ENCODE measurements at regions of chrX and their contacts with region 1.

Region 1: DNA sequence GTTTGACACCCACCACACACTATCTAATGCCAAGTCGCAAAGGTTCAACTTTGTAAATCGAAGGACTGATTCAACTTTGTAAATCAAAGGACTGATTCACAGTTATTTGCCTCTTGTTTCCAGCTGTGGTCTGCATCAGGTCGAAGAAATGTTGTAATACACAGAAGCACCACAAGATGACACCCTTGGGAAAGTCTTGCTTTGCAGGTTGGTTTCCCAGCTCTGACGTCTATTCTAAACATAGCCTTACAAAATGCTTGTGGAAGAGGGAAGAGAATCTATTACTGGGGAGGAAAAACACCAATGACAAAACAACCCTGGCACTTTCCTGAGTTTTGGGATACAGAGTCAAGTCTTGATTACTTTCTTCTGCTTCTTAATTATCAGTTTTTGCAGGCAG is 35.3 kb downstream of the SUPT20HL1 start:
- DNase-seq: peak; percentile 82
- ATAC-seq: peak; percentile 93
- H3K4me3 ChIP-seq: no peak overlapping the region
- H3K27ac ChIP-seq: no peak overlapping the region
- H3K4me1 ChIP-seq: no peaks in the 10 kb centered on the region
- H3K27me3 ChIP-seq: peaks cover 27% of the 10 kb centered on the region
- CTCF ChIP-seq: peak; percentile 83
- POLR2A ChIP-seq: no peak
- RAD21 ChIP-seq: peak; percentile 86

Region 2: GRCh38 chrX:24259544-24260240 is 136.1 kb before region 1 on chrX:
- CTCF ChIA-PET with region 1: interaction called, 3 read pairs
- POLR2A ChIA-PET with region 1: no interaction called
- dilution Hi-C with region 1: no loop called
- in situ Hi-C with region 1: no loop called
- intact Hi-C with region 1: loop called (anchors 2 kb)
- DNase-seq: peak; percentile 80
- ATAC-seq: peak; percentile 94
- H3K4me3 ChIP-seq: no peak overlapping the region
- H3K27ac ChIP-seq: no peak overlapping the region
- H3K4me1 ChIP-seq: no peaks in the 10 kb centered on the region; the same call in 1 of the 2 replicates
- H3K27me3 ChIP-seq: peaks cover 7% of the 10 kb centered on the region
- CTCF ChIP-seq: peak; percentile 73
- POLR2A ChIP-seq: no peak
- RAD21 ChIP-seq: peak; percentile 79

Region 3: DNA sequence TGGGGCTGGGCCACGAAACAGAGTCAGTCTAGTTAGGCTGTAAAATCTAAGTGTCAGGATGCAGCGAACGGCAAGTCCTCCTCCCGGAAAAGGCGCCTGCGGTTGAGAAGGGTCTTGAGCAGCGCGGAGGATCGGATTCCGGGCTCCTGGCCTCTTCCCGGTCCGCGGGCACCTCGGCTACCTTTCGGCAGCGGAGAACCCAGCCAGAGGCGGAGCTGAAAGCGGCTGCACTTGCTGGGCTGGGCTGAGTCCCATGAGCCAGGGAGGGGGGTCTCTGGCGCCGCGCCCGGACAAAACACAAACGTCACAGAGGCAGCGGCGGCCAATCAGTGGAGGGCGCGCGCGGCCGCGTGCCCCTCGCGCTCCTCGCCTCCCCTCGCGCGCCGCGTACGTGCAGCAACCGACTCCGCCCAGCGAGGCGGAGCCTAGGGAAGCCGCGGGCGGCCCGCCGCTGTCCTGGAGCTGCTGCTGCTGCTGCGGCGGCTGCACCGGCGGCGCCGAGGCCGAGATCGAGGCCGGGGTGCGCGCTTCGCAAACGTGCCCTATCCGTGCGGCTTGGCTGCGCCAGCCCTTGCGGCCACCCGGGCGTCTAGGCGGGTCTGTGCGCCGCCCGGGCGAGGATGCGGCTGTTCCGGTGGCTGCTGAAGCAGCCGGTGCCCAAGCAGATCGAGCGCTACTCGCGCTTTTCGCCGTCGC is 69.2 kb after region 1 on chrX and contains the start of gene PDK3:
- CTCF ChIA-PET with region 1: interaction called, 5 read pairs
- POLR2A ChIA-PET with region 1: interaction called, 3 read pairs
- dilution Hi-C with region 1: no loop called
- in situ Hi-C with region 1: no loop called
- intact Hi-C with region 1: loop called (anchors 2 kb)
- DNase-seq: peak; percentile 77
- ATAC-seq: peak; percentile 100
- H3K4me3 ChIP-seq: peak within 1 kb of the TSS; percentile 87
- H3K27ac ChIP-seq: no peak within 1 kb of the TSS; the same call in 1 of the 2 replicates
- H3K4me1 ChIP-seq: no peaks in the 10 kb centered on the region
- H3K27me3 ChIP-seq: peaks cover 3% of the 10 kb centered on the region
- CTCF ChIP-seq: no peak
- POLR2A ChIP-seq: no peak
- RAD21 ChIP-seq: no peak
- total RNA-seq, gene PDK3: 4.8 and 5.0 TPM in 2 replicates

Region 4: GRCh38 chrX:24498975-24499374 is 103.2 kb after region 1 on chrX:
- CTCF ChIA-PET with region 1: interaction called, 9 read pairs
- POLR2A ChIA-PET with region 1: no interaction called
- dilution Hi-C with region 1: no loop called
- in situ Hi-C with region 1: no loop called
- intact Hi-C with region 1: loop called (anchors 1 kb)
- DNase-seq: peak; percentile 11
- ATAC-seq: peak; percentile 35; the same call in 1 of the 2 replicates
- H3K4me3 ChIP-seq: no peak overlapping the region
- H3K27ac ChIP-seq: no peak overlapping the region
- H3K4me1 ChIP-seq: no peaks in the 10 kb centered on the region
- H3K27me3 ChIP-seq: no peaks in the 10 kb centered on the region; the same call in 1 of the 2 replicates
- CTCF ChIP-seq: peak; percentile 50
- POLR2A ChIP-seq: no peak
- RAD21 ChIP-seq: peak; percentile 38

Region 5: GRCh38 chrX:24561121-24561520 is 165.3 kb after region 1 on chrX:
- CTCF ChIA-PET with region 1: no interaction called
- POLR2A ChIA-PET with region 1: no interaction called
- dilution Hi-C with region 1: no loop called
- in situ Hi-C with region 1: no loop called
- intact Hi-C with region 1: loop called (anchors 2 kb)
- DNase-seq: peak; percentile 11
- ATAC-seq: no peak
- H3K4me3 ChIP-seq: no peak overlapping the region
- H3K27ac ChIP-seq: no peak overlapping the region
- H3K4me1 ChIP-seq: no peaks in the 10 kb centered on the region
- H3K27me3 ChIP-seq: peaks cover 6% of the 10 kb centered on the region; the same call in 1 of the 2 replicates
- CTCF ChIP-seq: peak; percentile 28
- POLR2A ChIP-seq: no peak
- RAD21 ChIP-seq: peak; percentile 39

Region 6: GRCh38 chrX:24693453-24694202 is 297.9 kb after region 1 on chrX and contains the start of gene POLA1:
- CTCF ChIA-PET with region 1: no interaction called
- POLR2A ChIA-PET with region 1: no interaction called
- dilution Hi-C with region 1: no loop called
- in situ Hi-C with region 1: no loop called
- intact Hi-C with region 1: loop called (anchors 5 kb)
- DNase-seq: peak; percentile 95
- ATAC-seq: peak; percentile 98
- H3K4me3 ChIP-seq: peak within 1 kb of the TSS; percentile 86
- H3K27ac ChIP-seq: peak within 1 kb of the TSS; percentile 24
- H3K4me1 ChIP-seq: no peaks in the 10 kb centered on the region
- H3K27me3 ChIP-seq: no peaks in the 10 kb centered on the region
- CTCF ChIP-seq: peak; percentile 33
- POLR2A ChIP-seq: no peak
- RAD21 ChIP-seq: no peak; the same call in 1 of the 2 replicates
- total RNA-seq, gene POLA1: 14.4 and 15.1 TPM in 2 replicates

Region 7: DNA sequence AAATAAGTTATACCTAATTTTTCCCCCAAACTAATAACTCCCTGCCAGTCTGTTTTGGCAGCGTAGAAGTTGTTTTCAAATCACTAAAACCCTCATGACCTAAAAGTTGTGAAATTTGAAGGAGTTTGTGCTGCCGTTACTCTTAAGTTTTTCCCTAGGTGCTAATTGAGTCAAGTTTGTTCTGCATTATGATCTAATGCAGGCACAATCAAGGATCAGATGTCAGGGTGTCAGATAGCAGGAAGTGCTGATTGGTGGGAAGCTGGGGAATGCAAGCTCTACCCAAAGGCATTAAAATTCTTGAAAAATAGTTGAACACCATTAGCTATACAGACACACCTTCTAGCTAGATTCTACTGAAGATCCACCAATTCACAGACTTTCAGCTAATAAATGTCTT is 568.0 kb after region 1 on chrX:
- CTCF ChIA-PET with region 1: no interaction called
- POLR2A ChIA-PET with region 1: no interaction called
- dilution Hi-C with region 1: no loop called
- in situ Hi-C with region 1: no loop called
- intact Hi-C with region 1: no loop called
- DNase-seq: no peak
- ATAC-seq: no peak
- H3K4me3 ChIP-seq: no peak overlapping the region
- H3K27ac ChIP-seq: no peak overlapping the region
- H3K4me1 ChIP-seq: no peaks in the 10 kb centered on the region
- H3K27me3 ChIP-seq: no peaks in the 10 kb centered on the region
- CTCF ChIP-seq: no peak
- POLR2A ChIP-seq: no peak
- RAD21 ChIP-seq: no peak

Measured in IMR-90 (cell line).